HEK293 (cell line): ENCODE measurements at regions of chr11 and their contacts with region 1.

Region 1: GRCh38 chr11:102780491-102780918 is at the start of gene MMP10:
- H3K4me3 ChIP-seq: no peak within 1 kb of the TSS
- H3K27ac ChIP-seq: no peak within 1 kb of the TSS
- H3K4me1 ChIP-seq: no peaks in the 10 kb centered on the region
- CTCF ChIP-seq: no peak

Region 2: DNA sequence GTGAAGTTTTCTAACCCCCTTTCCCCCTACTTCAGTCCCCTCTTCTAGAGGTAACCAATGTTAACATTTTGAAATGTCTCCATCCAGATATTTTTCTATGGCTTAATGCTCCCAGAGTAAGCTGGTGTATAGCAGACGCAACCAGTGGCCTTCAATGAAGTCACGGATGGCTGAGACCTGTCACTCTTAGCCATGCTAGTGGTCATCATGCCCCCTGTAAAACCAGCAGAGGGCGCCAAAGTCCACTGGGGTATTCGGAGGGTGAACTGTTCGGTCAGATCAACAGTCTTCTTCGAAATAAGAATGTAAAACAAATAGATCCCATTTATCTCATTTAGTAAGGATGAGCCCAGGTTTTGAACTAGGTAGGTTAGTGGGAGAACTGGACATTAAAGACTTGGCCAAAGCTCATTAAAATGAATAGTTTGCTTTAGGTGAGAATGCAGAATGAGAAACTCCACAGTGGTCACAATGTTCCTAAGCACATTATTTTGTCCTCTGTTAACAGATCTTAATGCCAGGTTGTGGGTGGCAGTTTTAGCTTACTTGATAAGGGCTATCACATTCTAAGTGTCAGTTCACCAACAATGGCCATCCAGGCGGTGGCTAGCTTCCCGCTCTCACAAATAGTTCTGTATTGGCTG is 47.2 kb before region 1 on chr11:
- CTCF ChIA-PET with region 1: interaction called, 10 read pairs
- POLR2A ChIA-PET with region 1: no interaction called
- H3K4me3 ChIP-seq: no peak overlapping the region
- H3K27ac ChIP-seq: no peak overlapping the region
- H3K4me1 ChIP-seq: no peaks in the 10 kb centered on the region
- CTCF ChIP-seq: peak; percentile 46; the same call in 1 of the 2 replicates

Region 3: GRCh38 chr11:102807921-102808320 is 27.4 kb after region 1 on chr11:
- CTCF ChIA-PET with region 1: no interaction called
- POLR2A ChIA-PET with region 1: no interaction called
- H3K4me3 ChIP-seq: no peak overlapping the region
- H3K27ac ChIP-seq: no peak overlapping the region
- H3K4me1 ChIP-seq: no peaks in the 10 kb centered on the region
- CTCF ChIP-seq: no peak